GM10248 (cell line): ENCODE measurements at regions of chr22 and their contacts with region 1.

Region 1: GRCh38 chr22:38766076-38766777 is 10.4 kb upstream of the SUN2 start:
- DNase-seq: peak; percentile 54
- CTCF ChIP-seq: peak; percentile 83

Region 2: DNA sequence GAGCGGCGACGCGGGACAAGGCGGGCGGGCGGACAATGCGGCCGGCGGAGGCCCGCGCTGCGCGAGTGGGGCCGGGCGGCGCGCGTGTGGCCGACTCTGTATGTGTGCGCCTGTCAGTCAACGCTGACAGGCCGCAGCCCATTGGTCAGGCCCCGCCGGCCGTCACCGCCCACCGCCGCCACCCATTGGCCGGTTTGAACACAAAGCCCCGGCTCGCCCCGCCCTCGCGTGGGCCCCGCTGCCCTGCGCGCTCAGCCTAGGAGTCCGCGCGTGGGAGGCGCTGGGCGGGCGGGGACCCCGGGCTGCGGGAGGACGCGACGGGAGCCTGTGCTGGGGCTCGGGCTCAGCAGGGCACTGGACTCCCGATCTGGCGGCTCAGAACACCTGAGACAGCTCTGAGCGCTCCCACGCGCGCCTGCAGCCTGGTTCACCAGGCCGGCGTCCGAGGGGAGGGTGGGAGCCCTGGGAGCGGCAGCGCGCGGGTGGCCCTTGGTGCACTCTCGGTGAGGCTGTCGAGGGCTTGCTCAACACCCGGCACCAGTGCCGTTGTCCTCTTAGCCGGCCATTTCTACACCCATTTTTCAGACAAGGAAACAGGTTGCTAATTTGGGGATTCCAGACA is 10.2 kb before region 1 on chr22 and contains the start of gene SUN2:
- CTCF ChIA-PET with region 1: interaction called, 39 read pairs
- POLR2A ChIA-PET with region 1: no interaction called
- DNase-seq: peak; percentile 99
- CTCF ChIP-seq: no peak

Region 3: DNA sequence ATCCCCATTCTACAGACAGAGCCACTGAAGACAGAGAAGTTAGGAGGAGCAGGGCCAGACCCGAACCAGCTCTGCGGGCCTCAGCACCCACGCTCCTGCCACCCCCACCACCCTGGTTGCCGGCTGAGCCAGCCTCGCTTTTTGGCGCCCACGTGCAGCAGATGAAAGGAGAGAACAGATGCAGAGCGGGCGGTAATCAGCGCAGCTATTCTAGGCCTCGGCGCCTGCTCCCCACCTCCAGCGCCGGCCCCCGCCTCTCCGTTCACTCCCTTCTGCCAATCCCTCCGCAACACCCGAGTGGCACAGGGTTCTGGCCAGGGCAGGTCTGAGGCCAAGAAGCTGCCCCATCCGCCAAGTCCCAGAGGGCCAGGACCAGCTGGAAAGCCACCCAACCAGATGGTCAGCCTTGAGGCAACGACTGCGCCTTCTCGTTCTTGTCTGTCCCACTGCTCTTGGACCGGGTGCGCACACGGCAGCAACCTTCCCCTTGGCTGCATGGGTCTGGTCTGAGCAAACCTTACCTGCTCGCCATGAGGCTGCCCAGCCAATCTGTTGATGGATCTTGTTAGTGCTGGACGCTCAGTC is 11.0 kb after region 1 on chr22:
- CTCF ChIA-PET with region 1: interaction called, 12 read pairs
- POLR2A ChIA-PET with region 1: no interaction called
- DNase-seq: no peak
- CTCF ChIP-seq: no peak

Region 4: GRCh38 chr22:38782402-38783094 is 16.3 kb after region 1 on chr22:
- CTCF ChIA-PET with region 1: interaction called, 12 read pairs
- POLR2A ChIA-PET with region 1: no interaction called
- DNase-seq: peak; percentile 19
- CTCF ChIP-seq: no peak

Region 5: DNA sequence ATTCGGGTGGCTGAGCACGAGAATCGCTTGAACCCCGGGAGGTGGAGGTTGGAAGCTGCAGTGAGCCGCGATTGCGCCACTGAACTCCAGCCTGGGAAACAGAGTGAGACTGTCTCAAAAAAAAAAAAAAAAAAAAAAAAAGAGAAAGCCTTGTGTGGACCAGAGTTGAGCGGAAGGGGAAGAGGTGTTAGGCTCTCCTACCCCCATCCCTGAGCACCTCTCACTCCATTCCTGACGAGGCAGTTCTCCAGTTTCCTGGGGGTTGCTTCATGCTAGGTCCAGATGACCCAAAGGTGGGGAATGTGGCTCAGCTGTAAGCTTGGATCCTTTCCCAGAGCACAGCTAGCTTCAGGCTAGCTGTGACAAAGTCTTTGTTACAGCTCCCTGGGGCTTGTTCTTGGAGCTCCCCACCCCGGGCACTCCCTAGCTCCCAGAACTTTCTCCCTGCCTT is 36.5 kb after region 1 on chr22:
- CTCF ChIA-PET with region 1: interaction called, 13 read pairs
- POLR2A ChIA-PET with region 1: no interaction called
- DNase-seq: no peak
- CTCF ChIP-seq: no peak